OCI-LY7 (cell line): ENCODE measurements at regions of chr1 and their contacts with region 1.

Region 1: DNA sequence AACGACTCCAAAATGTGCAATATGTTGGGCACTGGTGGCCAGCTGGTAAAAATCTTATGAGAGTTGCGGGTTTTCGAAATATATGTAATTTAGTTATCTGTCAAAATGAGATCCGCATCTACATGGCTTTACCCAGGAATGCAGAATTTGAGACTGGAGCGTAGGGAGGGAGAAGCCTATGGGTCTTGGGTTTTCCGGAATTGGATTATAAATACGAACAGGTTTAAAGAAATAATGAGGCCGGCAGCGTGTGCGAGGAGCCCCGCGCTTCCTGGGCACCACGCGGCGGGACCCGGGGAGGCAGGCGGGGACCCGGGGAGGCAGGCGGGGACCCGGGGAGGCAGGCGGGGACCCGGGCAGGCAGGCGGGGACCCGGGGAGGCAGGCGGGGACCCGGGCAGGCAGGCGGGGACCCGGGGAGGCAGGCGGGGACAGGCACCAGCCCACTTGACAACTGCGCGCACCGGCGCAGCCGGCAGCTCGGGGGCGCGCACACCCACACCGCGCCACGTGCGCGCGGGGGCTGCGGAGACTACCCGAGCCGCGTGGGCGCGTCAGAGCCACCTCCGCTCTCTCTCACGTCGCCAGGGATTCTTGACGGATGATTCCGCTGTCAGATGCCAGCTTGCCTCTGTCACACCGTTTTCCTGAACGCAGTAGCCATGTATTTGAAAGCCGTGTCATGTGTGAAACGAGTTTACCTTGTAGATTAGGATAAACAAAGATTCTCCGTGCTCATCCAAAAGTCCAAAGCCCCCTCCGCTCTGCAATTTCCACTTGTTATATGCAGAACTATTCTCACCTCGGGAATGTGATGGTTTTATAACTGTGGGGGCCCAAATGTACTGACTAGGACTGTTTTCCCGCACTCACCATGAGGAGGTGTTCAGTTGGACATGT is 54.3 kb upstream of the HNRNPU start:
- DNase-seq: peak; percentile 73
- H3K4me3 ChIP-seq: peak overlapping the region; percentile 62
- H3K27ac ChIP-seq: peak overlapping the region; percentile 89
- H3K4me1 ChIP-seq: peaks cover 52% of the 10 kb centered on the region
- CTCF ChIP-seq: peak; percentile 33; the same call in 1 of the 2 replicates

Region 2: GRCh38 chr1:244874974-244875579 is 43.6 kb before region 1 on chr1:
- CTCF ChIA-PET with region 1: no interaction called
- POLR2A ChIA-PET with region 1: interaction called, 10 read pairs
- intact Hi-C with region 1: no loop called
- DNase-seq: no peak
- H3K4me3 ChIP-seq: no peak overlapping the region
- H3K27ac ChIP-seq: no peak overlapping the region
- H3K4me1 ChIP-seq: peaks cover 2% of the 10 kb centered on the region
- CTCF ChIP-seq: no peak

Region 3: DNA sequence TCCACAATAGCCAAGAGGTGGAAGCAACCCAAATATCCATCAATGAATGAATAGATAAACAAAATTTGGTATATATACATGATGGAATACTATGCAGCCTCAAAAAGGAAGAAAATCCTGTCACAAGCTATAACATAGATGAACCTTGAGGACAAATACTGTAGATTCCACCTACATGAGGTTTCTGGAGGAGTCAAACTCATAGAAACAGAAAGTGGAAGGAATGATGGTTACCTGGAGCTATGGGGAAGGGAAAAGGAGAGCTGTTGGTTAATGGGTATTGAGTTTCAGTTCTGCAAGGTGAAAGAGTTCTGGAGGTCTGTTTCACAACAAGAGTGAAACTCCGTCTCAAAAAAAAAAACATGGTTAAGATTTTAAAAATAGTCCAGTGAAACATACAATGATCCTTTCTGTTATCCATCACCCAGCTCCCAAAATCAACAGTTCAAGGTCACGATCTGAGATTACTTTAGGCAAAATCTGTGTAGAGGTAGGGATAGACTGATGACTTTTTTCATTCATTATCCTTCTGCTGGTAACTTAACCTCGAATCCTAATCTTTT is 26.5 kb after region 1 on chr1:
- CTCF ChIA-PET with region 1: interaction called, 3 read pairs
- POLR2A ChIA-PET with region 1: interaction called, 15 read pairs
- intact Hi-C with region 1: loop called (anchors 1 kb)
- DNase-seq: peak; percentile 37
- H3K4me3 ChIP-seq: no peak overlapping the region
- H3K27ac ChIP-seq: peak overlapping the region; percentile 39
- H3K4me1 ChIP-seq: peaks cover 22% of the 10 kb centered on the region
- CTCF ChIP-seq: no peak

Region 4: DNA sequence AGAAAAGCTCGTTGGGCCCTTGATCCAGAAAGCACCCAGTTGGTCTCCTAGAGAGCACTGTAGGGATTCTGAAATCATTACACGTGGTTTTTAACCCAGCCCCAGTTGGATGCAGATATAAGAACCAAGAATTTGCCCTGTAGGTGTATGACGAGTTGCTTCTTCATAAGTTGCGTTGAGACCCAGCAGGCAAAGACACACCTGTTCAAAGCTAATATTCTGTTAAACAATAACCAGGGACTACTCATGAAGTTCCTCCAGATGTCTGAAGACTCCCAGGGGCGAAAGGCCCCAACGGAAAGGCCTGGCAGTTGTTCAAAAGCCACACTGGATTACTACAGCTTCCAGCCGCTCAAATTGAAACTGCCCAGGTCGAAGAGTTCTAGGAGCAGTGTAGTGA is 34.3 kb after region 1 on chr1:
- CTCF ChIA-PET with region 1: no interaction called
- POLR2A ChIA-PET with region 1: interaction called, 9 read pairs
- intact Hi-C with region 1: loop called (anchors 5 kb)
- DNase-seq: no peak
- H3K4me3 ChIP-seq: no peak overlapping the region
- H3K27ac ChIP-seq: no peak overlapping the region
- H3K4me1 ChIP-seq: peaks cover 11% of the 10 kb centered on the region
- CTCF ChIP-seq: no peak

Region 5: GRCh38 chr1:245045087-245045881 is 126.6 kb after region 1 on chr1:
- CTCF ChIA-PET with region 1: no interaction called
- POLR2A ChIA-PET with region 1: interaction called, 3 read pairs
- intact Hi-C with region 1: loop called (anchors 2 kb)
- DNase-seq: no peak
- H3K4me3 ChIP-seq: no peak overlapping the region
- H3K27ac ChIP-seq: no peak overlapping the region
- H3K4me1 ChIP-seq: peaks cover 8% of the 10 kb centered on the region
- CTCF ChIP-seq: no peak